T-cell (primary cell): ENCODE measurements at regions of chr13 and their contacts with region 1.

Region 1: GRCh38 chr13:23609414-23609760 is 39.2 kb downstream of the TNFRSF19 start:
- DNase-seq: no peak
- ATAC-seq: no peak
- H3K4me3 ChIP-seq: no peak overlapping the region
- H3K4me3 Mint-ChIP-seq: peak overlapping the region; percentile 3 to 34 (median 6)
- H3K27ac ChIP-seq: no peak overlapping the region
- H3K27ac Mint-ChIP-seq: no peak overlapping the region
- H3K4me1 ChIP-seq: peaks cover 4 to 5% of the 10 kb centered on the region in 2 experiments
- H3K4me1 Mint-ChIP-seq: peaks cover 14 to 18% (median 15%) of the 10 kb centered on the region in 3 donors
- H3K27me3 ChIP-seq: peaks cover 0 to 4% of the 10 kb centered on the region in 2 experiments
- H3K27me3 Mint-ChIP-seq: peaks cover 23 to 28% of the 10 kb centered on the region in 2 donors

Region 2: GRCh38 chr13:23656637-23657371 is 47.4 kb after region 1 on chr13:
- CTCF ChIA-PET with region 1: no interaction called
- POLR2A ChIA-PET with region 1: no interaction called
- DNase-seq: no peak
- ATAC-seq: no peak
- H3K4me3 ChIP-seq: no peak overlapping the region
- H3K4me3 Mint-ChIP-seq: no peak overlapping the region
- H3K27ac ChIP-seq: no peak overlapping the region
- H3K27ac Mint-ChIP-seq: no peak overlapping the region
- H3K4me1 ChIP-seq: peaks cover 0 to 7% of the 10 kb centered on the region in 2 experiments
- H3K4me1 Mint-ChIP-seq: peaks cover 0 to 20% (median 5%) of the 10 kb centered on the region in 3 donors
- H3K27me3 ChIP-seq: peaks cover 0 to 11% of the 10 kb centered on the region in 2 experiments
- H3K27me3 Mint-ChIP-seq: peaks cover 7 to 8% of the 10 kb centered on the region in 2 donors

Region 3: DNA sequence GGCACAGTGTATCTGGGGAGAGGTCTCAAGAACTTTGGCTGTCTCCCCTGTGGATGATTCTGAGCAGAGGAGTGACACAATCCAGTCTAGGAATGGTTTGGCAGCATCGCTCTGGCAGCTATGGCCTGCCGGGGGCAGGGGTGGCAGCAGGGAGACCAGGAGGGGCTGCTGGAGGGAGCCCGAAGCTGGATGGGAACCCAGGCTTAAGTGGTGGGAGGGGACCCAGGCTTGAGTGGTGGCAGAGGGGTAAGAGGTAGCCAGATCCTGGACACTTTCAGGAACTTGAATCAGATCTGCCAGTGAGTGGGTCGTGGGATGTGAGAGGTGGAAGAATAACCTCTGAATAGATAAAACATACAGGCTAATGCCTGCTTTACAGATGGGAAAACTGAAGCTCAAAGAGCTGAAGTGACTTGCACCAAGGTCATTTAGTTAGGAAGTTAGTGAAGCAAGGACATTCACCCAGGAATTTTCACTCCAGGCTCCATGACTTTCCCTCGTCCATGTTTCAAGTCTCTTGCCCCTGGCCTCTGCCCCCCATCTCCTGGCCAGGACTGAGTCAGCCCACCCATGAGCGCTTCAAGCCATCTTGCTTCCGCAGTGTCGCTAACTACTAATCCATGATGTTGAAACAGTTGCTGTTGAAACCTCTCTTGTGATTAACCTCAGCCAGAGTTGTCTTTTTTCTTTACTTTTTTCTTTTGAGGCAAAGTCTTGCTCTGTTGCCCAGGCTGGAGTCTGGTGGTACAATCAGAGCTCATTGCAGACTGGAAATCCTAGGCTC is 670.1 kb after region 1 on chr13:
- CTCF ChIA-PET with region 1: interaction called in 1 of 2 experiments, 12 read pairs
- POLR2A ChIA-PET with region 1: no interaction called
- DNase-seq: no peak
- ATAC-seq: no peak
- H3K4me3 ChIP-seq: no peak overlapping the region
- H3K4me3 Mint-ChIP-seq: peak overlapping the region in 1 of 3 donors; percentile 16
- H3K27ac ChIP-seq: no peak overlapping the region
- H3K27ac Mint-ChIP-seq: peak overlapping the region; percentile 67 to 75
- H3K4me1 ChIP-seq: peaks cover 33 to 67% of the 10 kb centered on the region in 2 experiments
- H3K4me1 Mint-ChIP-seq: peaks cover 75 to 85% (median 81%) of the 10 kb centered on the region in 3 donors
- H3K27me3 ChIP-seq: no peaks in the 10 kb centered on the region
- H3K27me3 Mint-ChIP-seq: no peaks in the 10 kb centered on the region